Caco-2 (cell line): ENCODE measurements at regions of chr9 and their contacts with region 1.

Region 1: GRCh38 chr9:6055213-6055612 is 39.8 kb upstream of the RANBP6 start:
- DNase-seq: peak; percentile 40 to 76
- H3K4me3 ChIP-seq: no peak overlapping the region
- H3K4me3 Mint-ChIP-seq: no peak overlapping the region
- H3K27ac Mint-ChIP-seq: no peak overlapping the region
- H3K4me1 ChIP-seq: no peaks in the 10 kb centered on the region
- H3K4me1 Mint-ChIP-seq: no peaks in the 10 kb centered on the region
- H3K27me3 ChIP-seq: no peaks in the 10 kb centered on the region
- H3K27me3 Mint-ChIP-seq: peaks cover 3% of the 10 kb centered on the region
- CTCF ChIP-seq: peak; percentile 33 to 41

Region 2: DNA sequence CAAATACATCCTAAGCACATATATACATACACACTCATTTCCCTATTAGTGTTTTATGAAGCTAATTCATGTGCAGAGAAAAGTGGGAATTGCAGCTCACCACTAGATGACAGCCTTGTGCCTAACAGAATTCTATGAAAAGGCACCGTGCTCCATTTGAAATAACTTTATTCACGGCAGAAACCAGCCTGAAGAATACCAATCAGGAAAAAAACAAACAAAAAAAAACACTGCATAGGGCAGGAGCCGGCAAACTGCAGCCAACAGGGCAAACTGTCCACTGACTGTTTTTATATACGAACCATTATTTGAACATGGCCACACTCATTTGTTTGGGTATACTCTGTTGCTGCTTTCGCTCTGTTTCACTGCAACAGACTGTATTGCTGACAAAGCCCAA is 255.9 kb before region 1 on chr9:
- CTCF ChIA-PET with region 1: interaction called, 10 read pairs
- POLR2A ChIA-PET with region 1: no interaction called
- intact Hi-C with region 1: loop called (anchors 1 kb)
- DNase-seq: peak in 1 of 2 experiments; percentile 33
- H3K4me3 ChIP-seq: no peak overlapping the region
- H3K4me3 Mint-ChIP-seq: no peak overlapping the region
- H3K27ac Mint-ChIP-seq: no peak overlapping the region
- H3K4me1 ChIP-seq: peaks cover 22% of the 10 kb centered on the region
- H3K4me1 Mint-ChIP-seq: peaks cover 9% of the 10 kb centered on the region
- H3K27me3 ChIP-seq: no peaks in the 10 kb centered on the region
- H3K27me3 Mint-ChIP-seq: no peaks in the 10 kb centered on the region
- CTCF ChIP-seq: peak; percentile 53 to 70

Region 3: DNA sequence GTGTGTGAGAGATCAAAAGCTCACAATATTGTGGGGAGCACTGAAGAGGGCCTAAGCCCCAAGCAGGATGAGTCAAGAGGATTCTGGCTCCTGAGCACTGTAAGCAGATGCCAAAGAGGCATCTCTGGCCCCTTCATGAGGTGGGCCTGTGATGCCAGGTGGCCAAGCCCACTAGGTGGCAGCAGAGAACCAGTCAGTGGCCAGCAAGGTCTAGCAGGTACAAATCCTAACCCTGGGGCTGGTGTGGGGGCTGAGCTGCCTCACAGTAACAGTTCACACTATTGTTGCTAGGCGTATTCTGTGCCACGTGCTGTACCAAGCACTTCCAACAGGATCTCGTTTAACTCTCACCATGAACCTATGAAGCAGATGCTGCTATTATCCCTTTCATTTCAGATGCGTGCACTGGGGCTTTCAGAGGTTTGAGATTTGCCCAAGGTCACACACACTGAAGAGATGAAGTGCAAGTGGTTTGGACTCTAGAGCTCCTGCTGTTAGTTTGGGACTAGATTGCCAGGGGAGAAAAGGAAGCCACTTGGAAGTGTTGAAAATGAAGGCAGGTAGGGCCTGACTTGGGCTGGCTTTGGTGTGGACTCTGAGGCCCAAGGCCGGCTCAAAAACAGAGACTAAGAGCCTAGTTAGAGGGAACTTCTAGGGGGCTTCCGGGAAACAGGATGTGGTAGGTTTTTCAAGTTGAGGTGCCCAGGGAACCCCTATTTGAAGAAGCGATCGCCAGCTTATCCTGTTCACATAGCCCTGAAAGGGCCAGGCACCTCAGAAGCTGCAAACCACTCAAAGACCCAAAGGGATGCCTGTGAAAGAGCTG is 168.9 kb before region 1 on chr9:
- CTCF ChIA-PET with region 1: interaction called, 8 read pairs
- POLR2A ChIA-PET with region 1: no interaction called
- intact Hi-C with region 1: loop called (anchors 1 kb)
- DNase-seq: peak; percentile 76 to 83
- H3K4me3 ChIP-seq: no peak overlapping the region
- H3K4me3 Mint-ChIP-seq: no peak overlapping the region
- H3K27ac Mint-ChIP-seq: no peak overlapping the region
- H3K4me1 ChIP-seq: no peaks in the 10 kb centered on the region
- H3K4me1 Mint-ChIP-seq: no peaks in the 10 kb centered on the region
- H3K27me3 ChIP-seq: no peaks in the 10 kb centered on the region
- H3K27me3 Mint-ChIP-seq: no peaks in the 10 kb centered on the region
- CTCF ChIP-seq: peak; percentile 83 to 85

Region 4: GRCh38 chr9:6024020-6024554 is 31.1 kb before region 1 on chr9:
- CTCF ChIA-PET with region 1: interaction called, 8 read pairs
- POLR2A ChIA-PET with region 1: no interaction called
- intact Hi-C with region 1: loop called (anchors 1 kb)
- DNase-seq: peak in 1 of 2 experiments; percentile 14
- H3K4me3 ChIP-seq: no peak overlapping the region
- H3K4me3 Mint-ChIP-seq: peak overlapping the region; percentile 49
- H3K27ac Mint-ChIP-seq: no peak overlapping the region
- H3K4me1 ChIP-seq: no peaks in the 10 kb centered on the region
- H3K4me1 Mint-ChIP-seq: peaks cover 6% of the 10 kb centered on the region
- H3K27me3 ChIP-seq: no peaks in the 10 kb centered on the region
- H3K27me3 Mint-ChIP-seq: peaks cover 3% of the 10 kb centered on the region
- CTCF ChIP-seq: peak; percentile 44 to 57

Region 5: GRCh38 chr9:6106576-6107339 is 51.5 kb after region 1 on chr9:
- CTCF ChIA-PET with region 1: interaction called, 4 read pairs
- POLR2A ChIA-PET with region 1: no interaction called
- intact Hi-C with region 1: loop called (anchors 1 kb)
- DNase-seq: peak in 1 of 2 experiments; percentile 20
- H3K4me3 ChIP-seq: no peak overlapping the region
- H3K4me3 Mint-ChIP-seq: no peak overlapping the region
- H3K27ac Mint-ChIP-seq: no peak overlapping the region
- H3K4me1 ChIP-seq: no peaks in the 10 kb centered on the region
- H3K4me1 Mint-ChIP-seq: no peaks in the 10 kb centered on the region
- H3K27me3 ChIP-seq: no peaks in the 10 kb centered on the region
- H3K27me3 Mint-ChIP-seq: peaks cover 3% of the 10 kb centered on the region
- CTCF ChIP-seq: peak in 1 of 2 experiments; percentile 27

Region 6: GRCh38 chr9:6305954-6306563 is 250.8 kb after region 1 on chr9:
- CTCF ChIA-PET with region 1: interaction called, 23 read pairs
- POLR2A ChIA-PET with region 1: no interaction called
- intact Hi-C with region 1: no loop called
- DNase-seq: peak in 1 of 2 experiments; percentile 10
- H3K4me3 ChIP-seq: no peak overlapping the region
- H3K4me3 Mint-ChIP-seq: no peak overlapping the region
- H3K27ac Mint-ChIP-seq: no peak overlapping the region
- H3K4me1 ChIP-seq: no peaks in the 10 kb centered on the region
- H3K4me1 Mint-ChIP-seq: no peaks in the 10 kb centered on the region
- H3K27me3 ChIP-seq: no peaks in the 10 kb centered on the region
- H3K27me3 Mint-ChIP-seq: peaks cover 3% of the 10 kb centered on the region
- CTCF ChIP-seq: peak; percentile 36 to 43